ENCODE measurements at regions of chr17 and their contacts with region 1.

Region 1: GRCh38 chr17:34171245-34171818 is 83.8 kb upstream of the CCL2 start:
- DNase-seq: peak; percentile 69
- CTCF ChIP-seq: peak; percentile 83

Region 2: DNA sequence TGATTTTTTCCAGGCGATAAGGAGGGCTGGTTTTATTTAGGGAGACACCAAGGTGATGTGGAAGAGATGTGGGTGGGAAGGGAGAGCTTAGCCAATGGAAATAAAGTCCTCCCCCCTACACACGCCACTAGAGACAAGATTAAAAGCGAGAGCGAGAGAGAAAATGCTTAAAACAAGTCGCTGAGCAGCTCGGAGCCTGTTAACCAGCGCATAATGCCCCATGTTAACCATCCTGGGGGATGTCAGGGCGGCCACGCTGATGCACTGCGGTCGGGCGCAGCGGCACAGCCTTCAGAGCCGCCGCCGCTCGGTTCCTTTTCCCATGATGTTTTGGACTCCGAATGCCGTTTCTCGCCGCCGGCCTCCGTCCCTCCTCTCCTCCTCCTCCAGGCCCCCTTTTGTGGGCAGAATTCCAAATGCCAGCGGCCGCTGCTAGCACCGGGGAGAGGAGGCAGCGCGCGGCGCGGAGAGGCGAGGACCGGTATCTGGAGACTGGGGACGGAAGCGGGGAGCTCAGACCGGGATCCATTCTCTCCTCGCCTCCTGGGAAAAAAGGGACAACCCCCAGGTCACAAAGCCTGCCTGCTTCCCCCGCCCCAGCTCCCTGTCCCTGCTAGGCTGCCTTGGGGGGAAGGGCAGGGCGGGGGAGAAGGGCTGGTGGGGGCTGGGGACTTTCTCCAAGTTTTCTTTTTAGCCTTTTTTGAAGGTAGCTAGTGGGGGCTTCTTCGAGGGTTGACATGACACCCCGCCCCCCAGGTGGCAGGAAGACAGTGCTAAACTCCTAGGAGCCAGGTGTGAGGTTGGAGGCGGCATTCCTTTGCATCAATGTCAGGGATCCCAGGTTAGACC is 14.4 kb before region 1 on chr17:
- CTCF ChIA-PET with region 1: interaction called, 12 read pairs
- POLR2A ChIA-PET with region 1: no interaction called
- DNase-seq: no peak
- CTCF ChIP-seq: no peak

Region 3: GRCh38 chr17:34199932-34200534 is 28.7 kb after region 1 on chr17:
- CTCF ChIA-PET with region 1: interaction called, 10 read pairs
- POLR2A ChIA-PET with region 1: no interaction called
- DNase-seq: peak; percentile 76
- CTCF ChIP-seq: peak; percentile 100

Measured in GM10248 (cell line).